ENCODE measurements at regions of chr1 and their contacts with region 1.

Region 1: DNA sequence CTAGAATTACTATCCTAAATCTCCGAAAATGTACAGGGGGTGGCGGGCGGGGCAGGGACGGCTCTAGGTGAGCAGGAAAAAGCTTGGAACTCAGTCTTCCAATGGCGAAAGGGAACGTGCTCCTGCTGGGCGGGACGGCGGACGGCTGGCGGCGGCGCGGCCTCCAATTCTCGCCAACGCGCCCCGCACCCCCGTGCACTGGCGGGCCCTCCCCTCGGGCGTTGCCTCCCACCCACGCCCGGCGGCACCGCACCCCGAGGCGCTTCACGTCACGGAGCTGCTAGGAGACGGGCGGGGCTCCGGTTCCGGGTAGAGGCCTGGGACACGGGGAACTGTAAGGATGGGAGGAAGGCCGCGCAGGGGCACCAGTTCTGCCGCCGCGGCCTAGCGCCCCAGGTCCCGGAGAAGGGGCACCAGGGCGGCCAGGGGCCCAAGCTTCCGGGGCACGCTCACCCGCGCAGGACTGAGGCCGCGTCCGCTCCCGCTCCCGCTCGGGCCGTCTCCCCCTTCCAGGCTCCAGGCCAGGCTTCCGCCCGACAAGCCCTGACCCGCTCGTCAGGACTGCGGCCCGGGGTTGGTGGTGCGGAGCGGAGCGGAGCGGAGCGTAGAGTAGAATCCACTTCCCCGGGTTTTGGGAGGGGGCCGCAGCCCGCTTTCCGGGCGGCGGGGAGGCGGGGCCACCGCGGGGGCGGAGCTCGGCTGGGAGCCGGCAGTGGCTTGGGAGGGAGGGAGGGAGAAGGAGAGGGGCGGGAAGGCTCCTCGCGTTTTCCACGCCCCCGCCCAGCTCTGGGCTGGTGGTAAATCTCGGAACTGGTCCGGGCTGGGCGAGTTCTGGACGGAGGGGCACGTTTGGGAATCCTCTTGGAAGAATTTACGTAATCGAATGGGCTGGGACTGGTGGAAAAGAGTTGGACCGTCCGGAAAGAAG is at the start of gene DDX59:
- DNase-seq: peak; percentile 92
- H3K4me3 ChIP-seq: peak within 1 kb of the TSS; percentile 78
- H3K27ac ChIP-seq: peak within 1 kb of the TSS; percentile 70
- H3K4me1 ChIP-seq: peaks cover 16% of the 10 kb centered on the region
- CTCF ChIP-seq: no peak
- total RNA-seq, gene DDX59: 22.4 and 28.7 TPM in 2 replicates

Region 2: GRCh38 chr1:200510228-200510623 is 159.4 kb before region 1 on chr1:
- CTCF ChIA-PET with region 1: no interaction called
- POLR2A ChIA-PET with region 1: no interaction called
- intact Hi-C with region 1: no loop called
- DNase-seq: peak; percentile 82
- H3K4me3 ChIP-seq: no peak overlapping the region
- H3K27ac ChIP-seq: no peak overlapping the region
- H3K4me1 ChIP-seq: no peaks in the 10 kb centered on the region
- CTCF ChIP-seq: peak; percentile 99

Region 3: GRCh38 chr1:200659269-200659668 is 10.3 kb before region 1 on chr1:
- CTCF ChIA-PET with region 1: no interaction called
- POLR2A ChIA-PET with region 1: interaction called, 27 read pairs
- intact Hi-C with region 1: no loop called
- DNase-seq: no peak
- H3K4me3 ChIP-seq: no peak overlapping the region
- H3K27ac ChIP-seq: no peak overlapping the region
- H3K4me1 ChIP-seq: peaks cover 14% of the 10 kb centered on the region
- CTCF ChIP-seq: no peak

Region 4: DNA sequence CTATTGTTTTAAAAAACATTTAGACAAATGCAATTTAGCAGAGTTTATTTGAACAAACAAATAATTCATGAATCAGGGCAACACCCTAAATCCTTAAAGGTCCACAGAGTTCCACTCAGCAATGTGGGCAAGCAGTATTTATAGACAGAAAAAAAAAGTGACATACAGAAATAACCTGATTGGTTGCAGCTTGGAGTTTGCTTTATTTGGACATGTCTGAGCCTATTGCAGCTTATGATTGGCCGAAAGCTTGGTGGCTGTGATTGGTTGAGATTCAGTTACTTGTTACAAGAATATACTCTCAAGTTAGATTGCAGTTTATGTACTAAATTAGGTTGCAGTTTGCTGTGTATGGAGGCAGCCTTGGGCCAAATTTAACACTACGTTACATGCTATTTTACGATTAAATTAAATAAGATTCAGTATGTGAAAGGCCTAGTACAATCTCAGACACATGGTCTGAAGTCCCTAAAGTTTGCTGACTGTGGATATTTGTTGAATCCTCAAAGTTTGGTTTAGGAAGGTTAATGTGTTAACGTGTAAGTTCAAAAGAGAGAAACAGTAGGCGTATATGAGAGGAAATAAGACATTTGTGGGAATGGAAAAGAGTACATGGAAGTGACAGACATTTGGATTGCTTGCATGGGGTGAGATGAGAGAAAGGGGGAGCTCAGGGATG is 62.2 kb after region 1 on chr1:
- CTCF ChIA-PET with region 1: no interaction called
- POLR2A ChIA-PET with region 1: interaction called, 12 read pairs
- intact Hi-C with region 1: no loop called
- DNase-seq: no peak
- H3K4me3 ChIP-seq: no peak overlapping the region
- H3K27ac ChIP-seq: no peak overlapping the region
- H3K4me1 ChIP-seq: peaks cover 5% of the 10 kb centered on the region
- CTCF ChIP-seq: no peak

Region 5: DNA sequence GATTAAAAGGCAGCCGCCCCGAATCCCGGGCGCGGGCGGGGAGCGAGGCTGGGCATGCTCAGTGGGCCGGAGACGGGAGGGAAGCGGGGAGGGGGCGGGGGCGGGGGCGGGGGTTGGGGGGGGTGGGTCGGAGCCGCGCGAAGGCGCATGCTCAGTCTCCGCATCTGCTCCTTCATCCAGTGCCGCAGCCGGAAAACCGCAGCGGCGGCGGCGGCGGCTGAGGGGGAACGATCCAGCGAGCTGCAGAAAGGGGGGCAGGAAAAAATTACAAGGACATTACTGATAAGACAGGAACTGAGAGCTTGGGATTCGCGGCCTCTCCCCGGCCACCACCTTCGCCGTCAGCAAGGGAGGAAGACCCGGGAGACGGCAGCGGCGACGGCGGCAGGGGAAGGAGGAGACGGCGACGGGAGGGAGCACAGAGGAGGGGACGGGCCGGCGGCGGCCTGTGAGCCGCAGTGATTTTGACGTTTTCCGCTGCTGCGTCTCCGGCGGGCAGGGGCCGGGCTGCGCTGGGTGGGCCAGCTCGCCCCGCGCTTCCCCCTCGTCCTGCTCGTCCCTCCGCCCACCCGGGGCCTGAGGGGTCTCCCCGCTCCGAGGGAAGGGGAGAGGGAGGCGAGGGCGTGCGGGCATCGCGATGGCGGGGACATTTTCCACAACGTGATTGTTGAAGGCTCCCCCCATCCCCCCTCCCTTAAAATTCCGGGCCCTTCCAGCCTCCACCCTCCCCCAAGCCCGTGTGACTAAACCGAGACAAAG is 69.3 kb after region 1 on chr1 and contains the start of gene CAMSAP2:
- CTCF ChIA-PET with region 1: no interaction called
- POLR2A ChIA-PET with region 1: interaction called, 5 read pairs
- intact Hi-C with region 1: loop called (anchors 1 kb)
- DNase-seq: peak; percentile 77
- H3K4me3 ChIP-seq: peak within 1 kb of the TSS; percentile 97
- H3K27ac ChIP-seq: peak within 1 kb of the TSS; percentile 55
- H3K4me1 ChIP-seq: peaks cover 23% of the 10 kb centered on the region
- CTCF ChIP-seq: no peak
- total RNA-seq, gene CAMSAP2: 9.2 and 10.0 TPM in 2 replicates

Region 6: GRCh38 chr1:201023517-201023902 is 353.9 kb after region 1 on chr1 and contains the start of gene KIF21B:
- CTCF ChIA-PET with region 1: interaction called, 3 read pairs
- POLR2A ChIA-PET with region 1: interaction called, 7 read pairs
- intact Hi-C with region 1: loop called (anchors 5 kb)
- DNase-seq: peak; percentile 92
- H3K4me3 ChIP-seq: peak within 1 kb of the TSS; percentile 80
- H3K27ac ChIP-seq: peak within 1 kb of the TSS; percentile 97
- H3K4me1 ChIP-seq: peaks cover 83% of the 10 kb centered on the region
- CTCF ChIP-seq: no peak
- total RNA-seq, gene KIF21B: 25.0 and 30.5 TPM in 2 replicates